ENCODE measurements at regions of chr11 and their contacts with region 1.

Region 1: GRCh38 chr11:19566583-19567379 is 145.9 kb upstream of the NAV2 start:
- DNase-seq: no peak
- H3K4me3 ChIP-seq: no peak overlapping the region
- H3K4me3 Mint-ChIP-seq: no peak overlapping the region
- H3K27ac ChIP-seq: no peak overlapping the region
- H3K27ac Mint-ChIP-seq: no peak overlapping the region
- H3K4me1 ChIP-seq: no peaks in the 10 kb centered on the region
- H3K4me1 Mint-ChIP-seq: no peaks in the 10 kb centered on the region
- H3K27me3 ChIP-seq: no peaks in the 10 kb centered on the region
- H3K27me3 Mint-ChIP-seq: peaks cover 5 to 17% of the 10 kb centered on the region in 2 donors

Region 2: GRCh38 chr11:19478891-19479290 is 87.9 kb before region 1 on chr11:
- CTCF ChIA-PET with region 1: no interaction called
- POLR2A ChIA-PET with region 1: no interaction called
- intact Hi-C with region 1: no loop called
- DNase-seq: no peak
- H3K4me3 ChIP-seq: no peak overlapping the region
- H3K4me3 Mint-ChIP-seq: no peak overlapping the region
- H3K27ac ChIP-seq: no peak overlapping the region
- H3K27ac Mint-ChIP-seq: no peak overlapping the region
- H3K4me1 ChIP-seq: no peaks in the 10 kb centered on the region
- H3K4me1 Mint-ChIP-seq: no peaks in the 10 kb centered on the region
- H3K27me3 ChIP-seq: no peaks in the 10 kb centered on the region
- H3K27me3 Mint-ChIP-seq: peaks cover 15 to 21% of the 10 kb centered on the region in 2 donors

Region 3: DNA sequence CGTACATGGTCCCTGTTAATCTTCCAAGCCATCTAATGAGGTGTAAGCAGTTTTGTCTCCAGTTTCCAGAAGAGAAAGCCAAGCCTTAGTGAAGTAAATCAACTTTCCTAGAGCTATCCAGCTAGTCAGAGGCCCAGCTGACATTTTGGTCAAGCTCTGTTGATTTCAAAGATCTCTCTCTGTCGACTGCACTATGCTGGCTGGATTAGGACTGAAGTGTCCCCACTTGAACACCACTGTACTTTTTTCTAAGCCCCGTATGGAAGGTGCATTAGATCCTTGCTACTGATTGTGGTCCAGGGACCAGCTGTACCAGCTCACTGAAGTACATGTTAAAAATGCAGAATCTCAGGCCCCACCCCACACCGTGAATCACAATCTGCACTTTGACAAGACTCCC is 30.6 kb before region 1 on chr11:
- CTCF ChIA-PET with region 1: no interaction called
- POLR2A ChIA-PET with region 1: no interaction called
- intact Hi-C with region 1: no loop called
- DNase-seq: no peak
- H3K4me3 ChIP-seq: no peak overlapping the region
- H3K4me3 Mint-ChIP-seq: no peak overlapping the region
- H3K27ac ChIP-seq: no peak overlapping the region
- H3K27ac Mint-ChIP-seq: no peak overlapping the region
- H3K4me1 ChIP-seq: no peaks in the 10 kb centered on the region
- H3K4me1 Mint-ChIP-seq: no peaks in the 10 kb centered on the region
- H3K27me3 ChIP-seq: no peaks in the 10 kb centered on the region
- H3K27me3 Mint-ChIP-seq: peaks cover 3 to 13% of the 10 kb centered on the region in 2 donors

Region 4: DNA sequence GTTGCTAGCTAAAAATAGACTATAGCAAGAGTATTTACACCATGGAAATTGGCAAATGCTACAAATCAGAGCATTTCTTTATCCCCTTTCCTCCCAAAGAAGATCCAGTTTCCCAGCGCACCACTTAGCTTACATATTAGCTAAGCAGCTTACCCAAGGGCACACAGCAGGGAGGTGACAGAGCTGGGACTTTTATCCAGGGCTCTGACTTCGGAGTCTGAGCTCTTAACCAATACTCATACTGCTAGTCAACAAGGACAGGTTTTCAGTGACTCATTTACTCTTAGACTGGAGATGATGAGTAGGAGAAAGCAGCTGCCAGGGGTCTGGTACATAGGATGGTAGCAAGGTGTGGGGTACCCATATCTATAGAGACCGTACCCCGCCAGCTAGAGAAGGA is 184.3 kb after region 1 on chr11:
- CTCF ChIA-PET with region 1: interaction called, 203 read pairs
- POLR2A ChIA-PET with region 1: no interaction called
- intact Hi-C with region 1: no loop called
- DNase-seq: no peak
- H3K4me3 ChIP-seq: no peak overlapping the region
- H3K4me3 Mint-ChIP-seq: no peak overlapping the region
- H3K27ac ChIP-seq: no peak overlapping the region
- H3K27ac Mint-ChIP-seq: no peak overlapping the region
- H3K4me1 ChIP-seq: no peaks in the 10 kb centered on the region
- H3K4me1 Mint-ChIP-seq: peaks cover 0 to 1% (median 0%) of the 10 kb centered on the region in 4 donors
- H3K27me3 ChIP-seq: no peaks in the 10 kb centered on the region
- H3K27me3 Mint-ChIP-seq: peaks cover 2 to 6% of the 10 kb centered on the region in 2 donors

Region 5: DNA sequence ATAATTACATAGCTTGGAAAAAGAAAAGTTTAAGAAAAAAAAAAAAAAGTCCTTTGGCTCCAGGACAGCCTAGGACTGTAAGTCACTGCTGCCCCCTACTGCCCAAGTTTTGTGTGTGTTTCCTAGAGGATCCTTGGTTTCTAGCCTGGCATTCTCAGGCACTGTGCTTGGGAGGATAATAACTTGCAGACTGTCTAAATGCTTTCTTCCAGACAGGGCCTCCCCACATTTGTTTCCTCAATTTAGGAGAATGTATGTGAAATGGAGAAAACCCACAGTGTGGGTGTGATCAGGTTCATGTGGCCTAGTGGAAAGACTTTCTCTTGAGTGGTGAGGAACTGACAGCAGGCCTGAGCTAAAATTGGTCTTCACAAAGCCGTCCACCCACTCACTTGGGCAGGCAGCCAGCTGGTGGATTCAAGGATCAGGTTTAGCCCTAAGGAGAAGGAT is 336.9 kb after region 1 on chr11:
- CTCF ChIA-PET with region 1: interaction called, 20 read pairs
- POLR2A ChIA-PET with region 1: no interaction called
- intact Hi-C with region 1: loop called (anchors 2 kb)
- DNase-seq: peak in 4 of 5 donors; percentile 8 to 27 (median 19)
- H3K4me3 ChIP-seq: no peak overlapping the region
- H3K4me3 Mint-ChIP-seq: no peak overlapping the region
- H3K27ac ChIP-seq: no peak overlapping the region
- H3K27ac Mint-ChIP-seq: no peak overlapping the region
- H3K4me1 ChIP-seq: no peaks in the 10 kb centered on the region
- H3K4me1 Mint-ChIP-seq: no peaks in the 10 kb centered on the region
- H3K27me3 ChIP-seq: no peaks in the 10 kb centered on the region
- H3K27me3 Mint-ChIP-seq: peaks cover 0 to 2% of the 10 kb centered on the region in 2 donors